Calu3 (cell line): ENCODE measurements at regions of chr6 and their contacts with region 1.

Region 1: DNA sequence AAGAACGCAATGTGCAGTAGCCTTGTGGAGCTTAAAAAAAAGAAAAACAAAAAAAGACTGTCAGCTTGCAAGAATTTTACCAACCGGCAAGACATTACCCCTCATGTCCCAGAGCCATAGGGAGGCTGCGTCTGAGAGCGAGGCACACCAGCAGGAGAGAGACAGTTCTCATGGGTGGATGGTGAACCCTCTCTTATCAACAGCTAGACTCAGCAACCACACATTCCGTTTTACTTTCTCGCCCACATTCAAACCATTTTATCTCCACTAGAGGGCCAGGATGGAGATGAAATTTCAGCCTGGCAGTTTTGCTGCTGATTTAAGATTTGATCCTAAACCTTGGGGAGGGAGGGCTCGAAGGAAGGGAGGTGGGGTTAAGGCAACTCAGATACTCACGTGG is 247.0 kb downstream of the ATXN1 start:
- DNase-seq: peak; percentile 6
- H3K4me3 Mint-ChIP-seq: no peak overlapping the region
- H3K27ac Mint-ChIP-seq: no peak overlapping the region
- H3K4me1 Mint-ChIP-seq: peaks cover 30% of the 10 kb centered on the region
- H3K27me3 Mint-ChIP-seq: no peaks in the 10 kb centered on the region
- CTCF ChIP-seq: peak; percentile 47

Region 2: GRCh38 chr6:16712931-16713484 is 198.8 kb after region 1 on chr6:
- CTCF ChIA-PET with region 1: interaction called, 3 read pairs
- intact Hi-C with region 1: loop called (anchors 2 kb)
- DNase-seq: peak; percentile 36
- H3K4me3 Mint-ChIP-seq: peak overlapping the region; percentile 62
- H3K27ac Mint-ChIP-seq: peak overlapping the region; percentile 90
- H3K4me1 Mint-ChIP-seq: peaks cover 22% of the 10 kb centered on the region
- H3K27me3 Mint-ChIP-seq: no peaks in the 10 kb centered on the region
- CTCF ChIP-seq: no peak

Region 3: DNA sequence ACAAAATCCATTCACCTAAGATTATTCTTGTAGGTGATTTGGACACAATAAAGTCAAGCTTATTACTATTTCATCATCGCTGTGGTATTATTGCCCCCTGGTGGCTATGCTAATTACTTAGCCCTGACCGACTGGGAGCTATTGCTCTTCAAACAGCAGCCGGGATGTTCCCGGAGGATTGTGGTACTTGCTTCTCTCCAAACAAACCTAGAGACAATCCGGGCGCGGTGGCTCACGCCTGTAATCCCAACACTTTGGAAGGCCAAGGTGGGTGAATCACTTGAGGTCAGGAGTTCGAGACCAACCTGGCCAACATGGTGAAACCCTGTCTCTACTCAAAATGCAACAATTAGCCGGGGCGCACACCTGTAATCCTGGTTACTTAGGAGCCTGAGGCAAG is 572.2 kb after region 1 on chr6:
- CTCF ChIA-PET with region 1: interaction called, 4 read pairs
- intact Hi-C with region 1: loop called (anchors 10 kb)
- DNase-seq: peak; percentile 66
- H3K4me3 Mint-ChIP-seq: no peak overlapping the region
- H3K27ac Mint-ChIP-seq: no peak overlapping the region
- H3K4me1 Mint-ChIP-seq: no peaks in the 10 kb centered on the region
- H3K27me3 Mint-ChIP-seq: peaks cover under 1% of the 10 kb centered on the region
- CTCF ChIP-seq: peak; percentile 55